ENCODE measurements at regions of chr20 and their contacts with region 1.

Region 1: GRCh38 chr20:16517946-16518783 is 55.1 kb downstream of the KIF16B start:
- H3K4me3 Mint-ChIP-seq: no peak overlapping the region
- H3K27ac Mint-ChIP-seq: no peak overlapping the region
- H3K4me1 Mint-ChIP-seq: peaks cover 39% of the 10 kb centered on the region
- H3K27me3 Mint-ChIP-seq: no peaks in the 10 kb centered on the region

Region 2: GRCh38 chr20:16551633-16552414 is 33.7 kb after region 1 on chr20:
- intact Hi-C with region 1: loop called (anchors 2 kb)
- H3K4me3 Mint-ChIP-seq: peak overlapping the region; percentile 17
- H3K27ac Mint-ChIP-seq: peak overlapping the region; percentile 46
- H3K4me1 Mint-ChIP-seq: peaks cover 67% of the 10 kb centered on the region
- H3K27me3 Mint-ChIP-seq: no peaks in the 10 kb centered on the region

Region 3: DNA sequence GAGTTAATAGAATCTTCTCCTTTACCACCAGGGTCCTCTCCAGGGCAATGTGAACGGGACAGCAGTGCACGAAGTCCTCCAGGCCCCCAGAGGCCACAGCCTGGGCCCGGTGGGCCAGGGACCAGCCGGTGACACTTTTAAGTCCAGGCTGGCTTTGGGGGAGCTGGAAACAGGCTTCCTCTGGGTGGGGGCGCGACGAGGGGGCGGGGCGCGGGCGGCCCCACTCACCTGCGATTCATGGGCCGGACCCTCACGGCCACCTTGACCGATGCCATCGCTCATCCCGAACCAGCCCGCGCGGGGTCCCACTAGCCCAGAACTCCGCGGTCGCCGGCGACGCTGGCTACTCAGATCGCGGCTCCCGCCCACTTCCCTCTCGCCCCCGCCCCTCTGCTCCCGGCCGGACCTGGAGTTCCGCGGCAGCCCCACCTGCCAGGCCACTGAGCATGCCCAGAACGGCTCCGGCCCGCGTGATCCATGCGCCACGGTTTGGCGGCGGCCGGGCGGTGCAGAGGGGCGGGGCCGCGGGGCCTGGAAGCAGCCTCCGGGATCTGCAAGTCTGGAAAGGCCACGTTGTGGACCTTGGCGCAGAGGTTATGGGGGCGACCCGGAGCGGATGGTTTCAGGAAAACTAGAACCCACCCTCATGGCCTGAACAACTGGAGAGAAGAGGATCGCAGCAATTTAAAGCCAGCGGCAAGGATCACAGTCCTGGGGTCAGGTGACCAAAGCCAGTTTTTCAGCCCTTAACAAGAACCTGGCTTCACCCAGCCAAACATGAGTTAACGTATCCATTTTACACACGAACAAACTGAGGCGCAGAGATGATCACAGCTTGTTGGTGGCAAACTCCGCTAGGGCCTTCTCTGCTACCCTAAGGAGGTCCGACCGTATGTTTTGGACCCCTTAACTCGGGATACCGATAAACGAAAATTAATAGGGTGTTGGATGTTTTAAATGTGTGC is 55.1 kb after region 1 on chr20 and contains the start of gene KIF16B:
- intact Hi-C with region 1: loop called (anchors 2 kb)
- H3K4me3 Mint-ChIP-seq: peak within 1 kb of the TSS; percentile 88
- H3K27ac Mint-ChIP-seq: peak within 1 kb of the TSS; percentile 90
- H3K4me1 Mint-ChIP-seq: peaks cover 55% of the 10 kb centered on the region
- H3K27me3 Mint-ChIP-seq: peaks cover 1% of the 10 kb centered on the region

Region 4: GRCh38 chr20:16583474-16583873 is 65.3 kb after region 1 on chr20:
- intact Hi-C with region 1: no loop called
- H3K4me3 Mint-ChIP-seq: no peak overlapping the region
- H3K27ac Mint-ChIP-seq: no peak overlapping the region
- H3K4me1 Mint-ChIP-seq: no peaks in the 10 kb centered on the region
- H3K27me3 Mint-ChIP-seq: peaks cover 13% of the 10 kb centered on the region

Region 5: DNA sequence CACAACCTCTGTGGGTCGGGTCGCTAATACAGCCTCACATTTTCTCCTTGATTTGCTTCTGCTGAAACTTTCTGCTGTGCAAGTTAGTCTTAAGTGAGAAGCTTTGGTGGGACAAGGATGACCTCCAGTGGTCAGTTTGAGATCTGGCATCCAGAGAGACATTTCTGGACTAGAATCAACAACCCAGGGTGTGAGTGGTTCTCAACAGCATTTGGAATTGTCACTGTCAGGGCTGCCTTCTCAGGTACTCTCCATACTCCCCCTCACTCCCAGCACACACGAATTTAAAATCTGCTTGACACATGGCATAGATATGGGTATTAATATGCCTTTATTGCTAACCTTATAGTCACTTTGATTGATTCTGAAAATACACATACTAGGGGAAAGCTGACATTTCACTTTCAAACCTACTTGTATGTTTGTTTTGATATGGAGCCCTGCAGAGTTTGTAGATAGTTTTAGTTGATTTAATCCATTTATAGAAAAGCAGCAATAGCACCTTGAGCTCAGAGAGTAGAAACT is 243.2 kb after region 1 on chr20:
- intact Hi-C with region 1: loop called (anchors 2 kb)
- H3K4me3 Mint-ChIP-seq: no peak overlapping the region
- H3K27ac Mint-ChIP-seq: no peak overlapping the region
- H3K4me1 Mint-ChIP-seq: peaks cover 6% of the 10 kb centered on the region
- H3K27me3 Mint-ChIP-seq: peaks cover 4% of the 10 kb centered on the region